ENCODE measurements at regions of chr20 and their contacts with region 1.

Region 1: DNA sequence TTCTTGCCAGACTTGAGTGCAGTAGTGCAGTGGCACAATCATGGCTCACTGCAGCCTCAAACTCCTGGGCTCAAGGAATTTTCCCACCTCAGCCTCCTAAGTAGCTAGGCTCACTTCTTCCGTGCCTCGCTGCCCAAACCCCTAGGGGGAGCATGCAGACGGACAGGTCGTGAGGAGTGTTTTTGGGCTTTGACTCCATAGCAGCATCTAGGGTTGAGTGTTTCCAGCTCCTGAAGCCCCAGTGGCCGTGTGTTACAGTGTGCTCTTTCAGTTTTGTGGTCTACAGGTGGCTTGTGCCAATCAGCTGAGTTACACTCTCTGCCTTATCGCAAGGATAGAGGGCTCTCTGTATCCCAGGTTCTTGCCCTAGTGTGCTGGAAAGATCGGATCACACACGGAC is 33.4 kb downstream of the NCOA3 start:
- H3K4me3 ChIP-seq: no peak overlapping the region
- H3K27ac ChIP-seq: no peak overlapping the region
- H3K4me1 ChIP-seq: peaks cover 8% of the 10 kb centered on the region
- CTCF ChIP-seq: peak; percentile 64

Region 2: DNA sequence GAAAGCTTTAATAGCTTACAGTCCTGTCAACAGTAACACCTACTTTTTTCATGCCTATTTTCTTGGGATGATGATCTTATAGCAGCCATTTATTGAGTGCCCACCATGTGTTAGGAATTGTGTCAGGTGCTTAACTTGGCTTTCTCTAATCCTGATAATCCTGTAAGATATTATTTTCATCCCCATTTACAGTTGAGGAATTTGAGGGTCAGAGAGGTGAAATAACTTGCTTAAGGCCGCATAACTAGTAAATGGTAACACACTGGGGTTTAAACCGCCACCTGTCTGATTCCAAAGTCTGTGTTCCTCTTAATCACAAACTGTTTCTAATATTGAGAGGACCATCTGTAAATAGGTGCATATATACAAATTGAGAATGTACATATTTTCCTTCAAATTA is 22.1 kb after region 1 on chr20:
- CTCF ChIA-PET with region 1: no interaction called
- POLR2A ChIA-PET with region 1: interaction called, 10 read pairs
- H3K4me3 ChIP-seq: no peak overlapping the region
- H3K27ac ChIP-seq: no peak overlapping the region
- H3K4me1 ChIP-seq: peaks cover 3% of the 10 kb centered on the region
- CTCF ChIP-seq: no peak

Region 3: GRCh38 chr20:48029239-48029638 is 494.2 kb after region 1 on chr20:
- CTCF ChIA-PET with region 1: interaction called, 10 read pairs
- POLR2A ChIA-PET with region 1: no interaction called
- H3K4me3 ChIP-seq: no peak overlapping the region
- H3K27ac ChIP-seq: no peak overlapping the region
- H3K4me1 ChIP-seq: no peaks in the 10 kb centered on the region
- CTCF ChIP-seq: no peak

Measured in HEK293 (cell line).